CD4-positive, alpha-beta T cell (primary cell): ENCODE measurements at regions of chr20 and their contacts with region 1.

Region 1: DNA sequence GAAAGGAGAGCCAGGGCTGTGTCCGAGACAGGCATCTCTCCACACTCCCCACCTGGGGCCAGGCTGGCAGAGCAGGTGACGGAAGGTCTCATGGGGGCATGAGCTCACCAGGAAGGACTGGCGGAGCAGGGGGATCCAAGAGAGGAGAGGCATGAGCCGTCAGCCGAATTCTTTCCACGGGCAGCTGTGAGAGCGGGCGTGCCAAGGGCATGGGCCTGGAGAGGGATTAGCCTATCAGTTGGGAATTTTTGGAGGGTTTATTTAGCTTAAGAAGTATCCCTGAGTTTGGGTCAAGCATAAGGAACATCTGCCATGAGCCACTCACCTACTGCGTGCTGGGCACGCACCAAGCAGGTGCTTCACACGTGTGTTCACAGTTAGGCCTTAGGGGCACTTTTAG is 60.2 kb upstream of the ZNFX1 start:
- DNase-seq: no peak
- ATAC-seq: no peak
- H3K4me3 ChIP-seq: no peak overlapping the region
- H3K4me3 Mint-ChIP-seq: no peak overlapping the region
- H3K27ac ChIP-seq: no peak overlapping the region
- H3K27ac Mint-ChIP-seq: no peak overlapping the region
- H3K4me1 ChIP-seq: no peaks in the 10 kb centered on the region
- H3K4me1 Mint-ChIP-seq: no peaks in the 10 kb centered on the region
- H3K27me3 ChIP-seq: peaks cover 3 to 4% of the 10 kb centered on the region in 2 experiments
- H3K27me3 Mint-ChIP-seq: peaks cover 14% of the 10 kb centered on the region
- CTCF ChIP-seq: no peak

Region 2: GRCh38 chr20:49508435-49509199 is 170.6 kb after region 1 on chr20:
- CTCF ChIA-PET with region 1: interaction called, 4 read pairs
- POLR2A ChIA-PET with region 1: no interaction called
- intact Hi-C with region 1: loop called in 1 of 2 experiments (anchors 2 kb)
- DNase-seq: peak in 3 of 14 experiments; percentile 38 to 43 (median 39)
- ATAC-seq: no peak
- H3K4me3 ChIP-seq: no peak overlapping the region
- H3K4me3 Mint-ChIP-seq: no peak overlapping the region
- H3K27ac ChIP-seq: no peak overlapping the region
- H3K27ac Mint-ChIP-seq: no peak overlapping the region
- H3K4me1 ChIP-seq: peaks cover 4% of the 10 kb centered on the region
- H3K4me1 Mint-ChIP-seq: no peaks in the 10 kb centered on the region
- H3K27me3 ChIP-seq: peaks cover 33 to 36% of the 10 kb centered on the region in 2 experiments
- H3K27me3 Mint-ChIP-seq: peaks cover 60% of the 10 kb centered on the region
- CTCF ChIP-seq: peak; percentile 32

Region 3: GRCh38 chr20:49534255-49534712 is 196.2 kb after region 1 on chr20:
- CTCF ChIA-PET with region 1: no interaction called
- POLR2A ChIA-PET with region 1: no interaction called
- intact Hi-C with region 1: loop called (anchors 1 kb)
- DNase-seq: peak; percentile 18 to 72 (median 38)
- ATAC-seq: peak; percentile 70
- H3K4me3 ChIP-seq: no peak overlapping the region
- H3K4me3 Mint-ChIP-seq: no peak overlapping the region
- H3K27ac ChIP-seq: no peak overlapping the region
- H3K27ac Mint-ChIP-seq: no peak overlapping the region
- H3K4me1 ChIP-seq: peaks cover 9% of the 10 kb centered on the region
- H3K4me1 Mint-ChIP-seq: peaks cover 7% of the 10 kb centered on the region
- H3K27me3 ChIP-seq: peaks cover 0 to 8% of the 10 kb centered on the region in 2 experiments
- H3K27me3 Mint-ChIP-seq: peaks cover 33% of the 10 kb centered on the region
- CTCF ChIP-seq: peak; percentile 80

Region 4: GRCh38 chr20:49888345-49888966 is 550.4 kb after region 1 on chr20:
- CTCF ChIA-PET with region 1: no interaction called
- POLR2A ChIA-PET with region 1: no interaction called
- intact Hi-C with region 1: loop called in 1 of 2 experiments (anchors 2 kb)
- DNase-seq: peak in 13 of 14 experiments; percentile 19 to 73 (median 44)
- ATAC-seq: peak; percentile 69
- H3K4me3 ChIP-seq: no peak overlapping the region
- H3K4me3 Mint-ChIP-seq: no peak overlapping the region
- H3K27ac ChIP-seq: no peak overlapping the region
- H3K27ac Mint-ChIP-seq: peak overlapping the region; percentile 18
- H3K4me1 ChIP-seq: peaks cover 9% of the 10 kb centered on the region
- H3K4me1 Mint-ChIP-seq: peaks cover 4% of the 10 kb centered on the region
- H3K27me3 ChIP-seq: no peaks in the 10 kb centered on the region
- H3K27me3 Mint-ChIP-seq: no peaks in the 10 kb centered on the region
- CTCF ChIP-seq: peak; percentile 67